ENCODE measurements at regions of chr3 and their contacts with region 1.

Region 1: GRCh38 chr3:65575373-65575840 is 463.3 kb downstream of the MAGI1 start:
- DNase-seq: peak; percentile 80
- ATAC-seq: peak; percentile 90
- H3K4me3 ChIP-seq: no peak overlapping the region
- H3K27ac ChIP-seq: peak overlapping the region; percentile 67
- H3K4me1 ChIP-seq: peaks cover 25% of the 10 kb centered on the region
- H3K27me3 ChIP-seq: no peaks in the 10 kb centered on the region
- CTCF ChIP-seq: no peak

Region 2: DNA sequence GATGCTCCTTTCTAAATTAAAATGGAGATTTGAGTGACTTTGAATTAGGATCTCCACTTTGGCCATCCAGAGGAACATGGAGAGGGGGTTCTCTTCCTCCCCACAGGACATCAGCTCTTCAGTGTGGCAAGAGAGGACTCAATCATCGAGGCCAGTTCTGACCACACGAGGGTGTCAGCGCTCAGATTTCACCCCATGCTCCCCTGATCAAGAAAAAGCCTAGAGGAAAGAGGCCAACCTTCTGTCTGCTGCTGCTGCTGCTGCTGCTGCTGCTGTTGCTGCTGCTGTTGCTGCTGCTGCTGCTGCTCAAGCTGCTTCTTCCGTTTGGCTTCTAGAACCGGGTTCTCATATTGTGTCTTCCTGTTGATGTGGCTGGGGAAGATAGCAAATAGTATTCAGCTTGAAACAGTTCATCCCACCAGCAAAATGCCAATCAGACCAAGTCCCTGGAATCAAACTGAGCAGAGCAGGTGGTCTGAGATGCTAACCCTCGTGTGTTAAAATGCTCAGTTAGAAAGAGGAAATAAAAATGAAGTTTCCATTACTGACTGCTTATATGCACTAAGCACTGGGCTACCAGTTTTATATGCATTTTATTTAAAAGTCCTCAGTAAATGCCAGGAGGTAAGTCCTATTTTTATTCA is 135.6 kb before region 1 on chr3:
- CTCF ChIA-PET with region 1: interaction called, 4 read pairs
- POLR2A ChIA-PET with region 1: no interaction called
- intact Hi-C with region 1: loop called (anchors 10 kb)
- DNase-seq: peak; percentile 43
- ATAC-seq: peak; percentile 89
- H3K4me3 ChIP-seq: no peak overlapping the region
- H3K27ac ChIP-seq: no peak overlapping the region
- H3K4me1 ChIP-seq: no peaks in the 10 kb centered on the region
- H3K27me3 ChIP-seq: no peaks in the 10 kb centered on the region
- CTCF ChIP-seq: peak; percentile 43

Region 3: DNA sequence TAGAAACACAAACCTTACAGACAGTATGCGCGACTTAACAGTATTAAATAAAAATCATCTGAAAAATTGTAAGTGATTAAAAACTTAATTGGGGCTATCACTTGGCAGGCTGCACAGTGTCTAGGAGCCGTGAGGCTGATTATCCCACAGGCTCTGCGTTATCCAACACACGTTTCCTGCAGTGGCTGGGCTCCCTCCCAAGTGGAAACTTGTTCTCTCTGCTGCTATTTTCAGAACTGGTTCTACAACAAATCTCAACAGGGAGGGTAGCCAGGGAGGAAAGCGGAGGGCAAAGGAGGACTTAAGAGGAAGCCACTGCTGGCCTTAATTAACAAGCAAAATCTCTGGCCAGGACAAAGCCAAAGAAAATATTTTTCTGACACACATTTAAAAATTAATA is 91.9 kb before region 1 on chr3:
- CTCF ChIA-PET with region 1: no interaction called
- POLR2A ChIA-PET with region 1: no interaction called
- intact Hi-C with region 1: loop called (anchors 10 kb)
- DNase-seq: peak; percentile 59
- ATAC-seq: peak; percentile 29; the same call in 1 of the 2 replicates
- H3K4me3 ChIP-seq: no peak overlapping the region
- H3K27ac ChIP-seq: no peak overlapping the region
- H3K4me1 ChIP-seq: peaks cover 27% of the 10 kb centered on the region
- H3K27me3 ChIP-seq: no peaks in the 10 kb centered on the region
- CTCF ChIP-seq: no peak

Region 4: GRCh38 chr3:65672871-65673815 is 97.7 kb after region 1 on chr3:
- CTCF ChIA-PET with region 1: no interaction called
- POLR2A ChIA-PET with region 1: no interaction called
- intact Hi-C with region 1: loop called (anchors 10 kb)
- DNase-seq: peak; percentile 52
- ATAC-seq: peak; percentile 45
- H3K4me3 ChIP-seq: no peak overlapping the region
- H3K27ac ChIP-seq: no peak overlapping the region
- H3K4me1 ChIP-seq: no peaks in the 10 kb centered on the region
- H3K27me3 ChIP-seq: no peaks in the 10 kb centered on the region
- CTCF ChIP-seq: peak; percentile 71

Region 5: GRCh38 chr3:65732051-65732935 is 156.9 kb after region 1 on chr3:
- CTCF ChIA-PET with region 1: no interaction called
- POLR2A ChIA-PET with region 1: no interaction called
- intact Hi-C with region 1: loop called (anchors 10 kb)
- DNase-seq: peak; percentile 64
- ATAC-seq: peak; percentile 88
- H3K4me3 ChIP-seq: no peak overlapping the region
- H3K27ac ChIP-seq: no peak overlapping the region
- H3K4me1 ChIP-seq: no peaks in the 10 kb centered on the region
- H3K27me3 ChIP-seq: no peaks in the 10 kb centered on the region
- CTCF ChIP-seq: peak; percentile 65

Region 6: GRCh38 chr3:65986285-65986684 is 410.9 kb after region 1 on chr3:
- CTCF ChIA-PET with region 1: no interaction called
- POLR2A ChIA-PET with region 1: interaction called, 10 read pairs
- intact Hi-C with region 1: no loop called
- DNase-seq: no peak
- ATAC-seq: no peak
- H3K4me3 ChIP-seq: no peak overlapping the region
- H3K27ac ChIP-seq: no peak overlapping the region
- H3K4me1 ChIP-seq: no peaks in the 10 kb centered on the region
- H3K27me3 ChIP-seq: no peaks in the 10 kb centered on the region
- CTCF ChIP-seq: no peak

Measured in PC-3 (cell line).